ENCODE measurements at regions of chrX and their contacts with region 1.

Region 1: GRCh38 chrX:129982274-129983251 is at the start of gene BCORL1:
- DNase-seq: peak; percentile 89 to 96 (median 93)
- H3K4me3 ChIP-seq: peak within 1 kb of the TSS in 3 of 4 donors; percentile 8 to 25 (median 13)
- H3K27ac ChIP-seq: peak within 1 kb of the TSS in 3 of 5 donors; percentile 32 to 44 (median 38)
- H3K4me1 ChIP-seq: no peaks in the 10 kb centered on the region
- H3K27me3 ChIP-seq: no peaks in the 10 kb centered on the region
- CTCF ChIP-seq: no peak
- POLR2A ChIP-seq: peak; percentile 80 to 89
- total RNA-seq, gene BCORL1: 1.4 to 18.5 (median 9.2) TPM

Region 2: GRCh38 chrX:129510331-129510730 is 472.2 kb before region 1 on chrX:
- intact Hi-C with region 1: no loop called
- DNase-seq: peak; percentile 22 to 64 (median 60)
- H3K4me3 ChIP-seq: no peak overlapping the region
- H3K27ac ChIP-seq: no peak overlapping the region
- H3K4me1 ChIP-seq: peaks cover 0 to 13% of the 10 kb centered on the region in 2 donors
- H3K27me3 ChIP-seq: no peaks in the 10 kb centered on the region
- CTCF ChIP-seq: no peak
- POLR2A ChIP-seq: no peak

Region 3: GRCh38 chrX:130024127-130024526 is 41.6 kb after region 1 on chrX:
- intact Hi-C with region 1: loop called in 1 of 2 experiments (anchors 5 kb)
- DNase-seq: peak; percentile 58 to 89 (median 79)
- H3K4me3 ChIP-seq: no peak overlapping the region
- H3K27ac ChIP-seq: peak overlapping the region in 1 of 5 donors; percentile 45
- H3K4me1 ChIP-seq: peaks cover 6 to 8% of the 10 kb centered on the region in 2 donors
- H3K27me3 ChIP-seq: no peaks in the 10 kb centered on the region
- CTCF ChIP-seq: no peak
- POLR2A ChIP-seq: no peak

Region 4: GRCh38 chrX:130268500-130269170 is 286.1 kb after region 1 on chrX and contains the start of gene ZNF280C:
- intact Hi-C with region 1: no loop called
- DNase-seq: peak; percentile 79 to 96 (median 90)
- H3K4me3 ChIP-seq: peak within 1 kb of the TSS; percentile 8 to 59 (median 34)
- H3K27ac ChIP-seq: peak within 1 kb of the TSS; percentile 54 to 88 (median 71)
- H3K4me1 ChIP-seq: peaks cover 4 to 6% of the 10 kb centered on the region in 2 donors
- H3K27me3 ChIP-seq: no peaks in the 10 kb centered on the region
- CTCF ChIP-seq: peak in 3 of 6 experiments; percentile 7 to 14 (median 9)
- POLR2A ChIP-seq: peak; percentile 86 to 89
- total RNA-seq, gene ZNF280C: 2.6 to 7.3 (median 4.4) TPM

Region 5: GRCh38 chrX:130523461-130524394 is 541.2 kb after region 1 on chrX:
- intact Hi-C with region 1: no loop called
- DNase-seq: peak in 6 of 7 donors; percentile 22 to 54 (median 42)
- H3K4me3 ChIP-seq: peak overlapping the region in 1 of 4 donors; percentile 47
- H3K27ac ChIP-seq: no peak overlapping the region
- H3K4me1 ChIP-seq: no peaks in the 10 kb centered on the region
- H3K27me3 ChIP-seq: no peaks in the 10 kb centered on the region
- CTCF ChIP-seq: no peak
- POLR2A ChIP-seq: no peak

Measured in adrenal gland (tissue), 19 donors.